ENCODE measurements at regions of chr10 and their contacts with region 1.

Region 1: GRCh38 chr10:77173615-77174461 is 463.8 kb downstream of the KCNMA1 start:
- DNase-seq: peak in 1 of 2 donors; percentile 88
- H3K4me3 ChIP-seq: no peak overlapping the region
- H3K27ac ChIP-seq: peak overlapping the region in 1 of 2 donors; percentile 13
- H3K4me1 ChIP-seq: peaks cover 2 to 3% of the 10 kb centered on the region in 2 donors
- H3K27me3 ChIP-seq: no peaks in the 10 kb centered on the region
- CTCF ChIP-seq: peak; percentile 88 to 91 (median 90)

Region 2: GRCh38 chr10:77386365-77386764 is 212.5 kb after region 1 on chr10:
- intact Hi-C with region 1: no loop called
- DNase-seq: peak in 1 of 2 donors; percentile 9
- H3K4me3 ChIP-seq: no peak overlapping the region
- H3K27ac ChIP-seq: peak overlapping the region; percentile 93 to 94
- H3K4me1 ChIP-seq: peaks cover 8 to 57% of the 10 kb centered on the region in 2 donors
- H3K27me3 ChIP-seq: no peaks in the 10 kb centered on the region
- CTCF ChIP-seq: no peak

Region 3: DNA sequence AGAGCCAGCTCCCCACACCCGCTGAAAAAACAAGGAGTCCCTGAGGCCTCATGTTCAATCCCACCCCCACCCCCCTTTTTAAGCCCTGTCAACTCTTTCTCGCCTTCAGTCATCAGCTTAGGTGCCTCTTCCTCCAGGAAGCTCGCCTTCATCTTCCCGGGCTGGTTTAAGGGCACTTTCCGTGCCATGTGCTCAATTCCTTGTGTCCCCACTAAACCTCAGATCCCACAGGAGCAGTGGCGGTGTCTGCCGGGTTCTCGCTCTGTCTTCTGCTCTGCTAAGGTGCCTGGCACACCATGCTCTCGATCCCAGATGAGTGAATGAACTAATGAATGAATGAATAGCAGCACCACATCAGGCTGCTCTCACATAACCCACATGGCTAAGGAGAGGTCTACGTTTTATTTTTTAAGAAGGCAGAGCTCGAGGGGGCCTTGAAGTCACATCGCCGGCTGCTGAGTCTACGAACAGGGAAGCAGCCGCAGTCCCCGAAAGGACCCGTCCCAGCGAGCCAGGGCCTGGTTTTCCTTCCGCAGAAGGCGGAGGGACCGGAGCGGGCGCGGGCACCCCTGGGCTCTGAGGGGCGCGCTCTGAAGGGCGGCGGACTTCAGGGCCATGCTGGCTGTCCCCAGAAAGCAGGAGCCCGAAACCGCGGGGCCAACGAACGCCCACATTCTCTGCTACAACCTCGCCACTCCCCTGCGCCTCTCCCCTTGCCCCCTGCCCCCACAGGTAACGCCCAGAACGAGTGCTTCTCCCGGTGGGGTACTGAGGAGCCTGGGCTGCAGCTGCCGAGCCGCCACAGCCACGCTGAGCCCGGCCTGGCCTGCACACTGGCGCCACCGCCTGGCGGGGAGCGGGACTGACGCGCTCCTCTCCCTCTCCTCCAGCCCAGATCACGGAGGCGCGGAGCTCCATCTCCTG is 537.2 kb after region 1 on chr10:
- intact Hi-C with region 1: loop called (anchors 2 kb)
- DNase-seq: peak in 1 of 2 donors; percentile 84
- H3K4me3 ChIP-seq: peak overlapping the region; percentile 46 to 65
- H3K27ac ChIP-seq: no peak overlapping the region
- H3K4me1 ChIP-seq: peaks cover 0 to 3% of the 10 kb centered on the region in 2 donors
- H3K27me3 ChIP-seq: no peaks in the 10 kb centered on the region
- CTCF ChIP-seq: peak; percentile 92 to 100 (median 99)

Measured in ascending aorta (tissue), 2 donors.